ENCODE measurements at regions of chr9 and their contacts with region 1.

Region 1: DNA sequence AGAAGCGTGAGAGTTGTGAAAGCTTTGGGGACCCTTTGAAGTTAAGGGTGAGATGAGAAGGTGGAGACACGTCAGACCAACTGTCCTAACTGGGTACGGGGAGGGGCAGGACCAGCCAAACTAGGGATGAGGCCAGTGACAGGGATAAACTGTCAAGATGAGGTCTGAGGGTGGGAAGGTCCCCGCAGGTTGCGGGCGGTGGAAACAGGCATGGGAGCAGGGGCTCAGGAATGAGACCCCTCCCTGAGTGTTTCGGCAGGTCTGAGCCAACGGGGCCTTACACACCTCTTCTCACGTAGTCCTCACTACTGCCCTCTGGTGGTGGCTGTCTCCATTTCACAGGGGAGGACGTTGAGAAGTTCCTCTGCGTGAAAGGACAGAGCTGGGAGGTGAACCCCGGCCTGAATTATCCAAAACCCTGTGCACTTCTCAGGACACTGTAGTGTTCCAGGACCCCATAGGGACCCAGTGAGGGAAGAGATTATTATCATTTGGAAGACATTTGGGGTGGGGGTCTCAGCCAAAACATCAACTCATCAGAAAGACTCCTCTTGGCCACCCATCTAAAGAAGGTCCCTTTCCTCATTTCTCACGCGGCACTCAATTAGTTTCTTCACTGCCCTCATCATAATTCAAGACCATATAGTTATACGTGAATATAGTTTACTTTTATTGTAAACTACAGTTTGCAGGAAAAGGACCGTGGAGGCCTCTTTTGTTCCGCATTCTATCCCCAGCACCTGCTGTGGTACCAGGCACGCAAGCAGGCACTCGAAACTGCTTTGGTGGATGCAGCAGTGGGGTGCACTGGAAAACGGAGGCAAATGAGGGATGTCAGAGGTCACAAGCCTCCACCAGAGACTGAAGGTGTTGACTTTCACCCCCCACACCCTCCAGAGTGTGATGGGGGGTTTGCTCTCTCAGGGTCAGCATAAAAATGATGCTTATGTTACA is 21.7 kb upstream of the NANS start:
- DNase-seq: peak; percentile 85
- ATAC-seq: peak; percentile 85

Region 2: GRCh38 chr9:97703437-97704344 is 331.2 kb before region 1 on chr9:
- intact Hi-C with region 1: no loop called
- DNase-seq: no peak
- ATAC-seq: peak; percentile 45

Region 3: DNA sequence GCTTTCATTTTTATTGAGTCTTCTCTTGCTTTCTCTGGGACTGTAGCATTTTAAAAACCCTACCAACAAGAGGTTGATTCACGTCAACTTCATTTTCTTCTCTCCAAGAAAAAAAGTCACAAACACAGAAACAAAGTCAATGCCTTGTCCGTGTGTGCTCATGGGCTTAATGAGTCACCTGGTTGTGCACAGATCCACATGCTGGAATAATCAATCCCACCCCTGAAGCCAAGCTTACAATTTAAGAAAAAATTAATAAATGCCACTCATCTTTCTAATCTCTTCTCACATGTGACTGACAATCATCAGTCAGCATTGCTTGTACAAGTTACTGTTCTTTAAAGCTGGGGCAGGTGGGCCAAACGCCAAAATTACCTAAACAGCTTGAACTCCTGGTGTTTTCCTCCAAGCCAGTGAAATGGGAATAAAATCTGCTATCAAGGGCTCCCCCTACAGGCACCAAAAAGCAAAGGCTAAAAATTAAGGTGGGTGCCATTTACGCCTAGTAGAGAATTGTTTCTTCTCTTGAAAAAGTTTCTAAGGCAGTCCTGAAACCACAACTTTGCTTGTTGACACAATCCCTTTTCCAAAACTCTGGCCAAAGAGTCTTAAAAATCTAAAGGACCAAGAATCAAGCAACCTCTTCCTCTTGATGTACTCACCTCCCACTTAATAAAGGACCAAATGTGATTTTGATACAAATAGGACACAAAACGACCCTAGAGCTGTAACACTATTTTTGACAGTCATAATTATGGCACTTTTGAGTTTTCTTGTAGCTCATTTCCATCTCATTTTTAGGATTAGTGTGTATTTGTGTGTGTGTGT is 133.9 kb before region 1 on chr9:
- intact Hi-C with region 1: no loop called
- DNase-seq: no peak
- ATAC-seq: peak; percentile 45

Region 4: GRCh38 chr9:97921959-97922724 is 112.7 kb before region 1 on chr9 and contains the start of gene TRMO:
- intact Hi-C with region 1: loop called (anchors 10 kb)
- DNase-seq: peak; percentile 99
- ATAC-seq: peak; percentile 97
- total RNA-seq, gene TRMO: 6.0 TPM

Region 5: GRCh38 chr9:97982683-97983588 is 51.9 kb before region 1 on chr9 and contains the start of gene ANP32B:
- intact Hi-C with region 1: loop called (anchors 10 kb)
- DNase-seq: peak; percentile 95
- ATAC-seq: peak; percentile 90
- total RNA-seq, gene ANP32B: 49.1 TPM

Measured in left ventricle myocardium superior (tissue), 1 donor.